ENCODE measurements at regions of chr14 and their contacts with region 1.

Region 1: GRCh38 chr14:69191340-69192111 is at the start of gene EXD2:
- DNase-seq: peak; percentile 92
- H3K4me3 Mint-ChIP-seq: peak within 1 kb of the TSS; percentile 92
- H3K27ac Mint-ChIP-seq: peak within 1 kb of the TSS; percentile 81
- H3K4me1 Mint-ChIP-seq: no peaks in the 10 kb centered on the region
- H3K27me3 Mint-ChIP-seq: peaks cover 13% of the 10 kb centered on the region
- CTCF ChIP-seq: no peak
- total RNA-seq, gene EXD2: 13.1 and 14.0 TPM in 2 replicates

Region 2: DNA sequence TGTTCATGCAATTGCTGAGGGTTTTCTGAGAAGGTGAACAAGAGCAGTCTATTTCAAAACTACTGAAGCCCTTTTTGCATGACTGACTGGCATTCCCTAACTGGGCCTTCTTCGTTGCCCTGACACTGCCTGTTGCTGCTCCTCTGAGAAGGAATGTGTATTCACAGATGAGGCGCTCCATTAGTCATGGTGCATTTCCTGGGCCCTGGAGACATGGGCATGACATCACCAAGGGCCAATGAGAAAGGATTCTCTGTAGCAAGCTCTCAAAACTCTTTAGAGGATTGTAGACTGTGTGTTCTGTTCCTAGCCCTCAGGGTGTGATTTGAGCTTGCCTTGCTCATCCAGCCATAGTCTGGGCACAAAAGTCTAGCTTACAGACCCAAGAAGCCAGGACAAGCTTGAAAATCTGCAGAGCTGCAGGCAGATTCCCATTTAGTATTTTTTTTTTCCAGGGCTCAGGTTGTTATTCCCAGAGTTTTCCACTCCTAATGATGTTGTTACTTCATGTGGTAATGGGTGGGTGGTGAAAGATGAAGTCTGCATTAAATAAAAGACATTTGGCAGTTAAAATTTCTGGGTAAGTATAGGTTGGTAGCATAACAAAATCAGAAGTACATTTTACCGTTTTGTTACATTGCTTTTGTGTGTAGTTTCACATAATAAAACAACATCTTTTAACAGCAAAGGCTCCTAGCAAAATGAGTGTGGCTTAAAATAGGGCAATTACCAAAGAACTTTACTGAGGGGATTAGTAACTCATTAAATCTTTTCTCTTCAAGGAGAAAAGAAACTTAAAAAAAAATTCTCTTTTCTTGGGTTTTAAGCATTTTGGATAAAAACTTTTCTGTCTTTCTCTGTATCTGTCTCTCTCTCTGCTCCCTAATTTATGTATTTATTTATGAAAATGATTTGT is 1053.6 kb before region 1 on chr14:
- CTCF ChIA-PET with region 1: no interaction called
- intact Hi-C with region 1: no loop called
- DNase-seq: peak; percentile 79
- H3K4me3 Mint-ChIP-seq: no peak overlapping the region
- H3K27ac Mint-ChIP-seq: peak overlapping the region; percentile 89
- H3K4me1 Mint-ChIP-seq: peaks cover 38% of the 10 kb centered on the region
- H3K27me3 Mint-ChIP-seq: no peaks in the 10 kb centered on the region
- CTCF ChIP-seq: no peak

Region 3: DNA sequence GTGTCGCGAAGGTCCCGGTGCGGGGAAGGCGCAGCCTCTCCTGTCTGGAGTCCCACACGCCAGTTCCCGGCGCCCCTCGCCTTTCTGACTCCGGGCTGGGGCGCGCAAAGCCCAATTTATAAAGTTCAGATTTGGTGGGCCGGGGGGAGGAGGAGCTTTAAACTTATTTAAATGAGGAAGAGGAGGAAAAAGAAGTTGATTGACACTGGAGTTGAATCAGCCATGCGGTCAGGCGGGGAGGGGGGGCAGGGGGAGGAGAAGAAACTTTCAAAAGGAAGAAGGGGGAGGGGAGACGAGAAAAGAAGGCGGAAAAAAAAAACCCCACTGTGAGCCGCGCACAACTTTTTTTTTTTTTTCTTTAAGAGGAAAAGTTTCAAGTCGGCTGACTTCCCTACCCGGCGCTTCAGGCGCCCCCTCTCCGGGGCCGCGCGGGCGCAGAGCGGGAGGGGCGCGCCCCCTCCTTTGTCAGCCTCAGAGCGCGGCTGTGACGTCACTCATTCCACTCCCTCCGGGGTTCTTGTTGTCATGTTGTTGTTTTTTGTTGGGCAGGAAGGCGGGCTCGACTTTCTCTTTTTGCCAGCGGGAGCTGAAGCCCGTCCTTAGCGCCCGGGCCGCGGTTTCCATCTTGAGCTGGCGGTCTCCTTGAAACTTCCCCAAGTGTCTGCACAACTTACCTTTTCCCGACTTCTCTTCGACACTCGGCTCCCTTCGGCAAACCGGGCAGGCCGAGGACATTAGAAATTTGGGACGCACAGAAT is 398.4 kb before region 1 on chr14 and contains the start of gene ZFP36L1:
- CTCF ChIA-PET with region 1: no interaction called
- intact Hi-C with region 1: no loop called
- DNase-seq: peak; percentile 91
- H3K4me3 Mint-ChIP-seq: peak within 1 kb of the TSS; percentile 85
- H3K27ac Mint-ChIP-seq: peak within 1 kb of the TSS; percentile 81
- H3K4me1 Mint-ChIP-seq: peaks cover 11% of the 10 kb centered on the region
- H3K27me3 Mint-ChIP-seq: no peaks in the 10 kb centered on the region
- CTCF ChIP-seq: no peak
- total RNA-seq, gene ZFP36L1: 208 and 240 TPM in 2 replicates

Region 4: DNA sequence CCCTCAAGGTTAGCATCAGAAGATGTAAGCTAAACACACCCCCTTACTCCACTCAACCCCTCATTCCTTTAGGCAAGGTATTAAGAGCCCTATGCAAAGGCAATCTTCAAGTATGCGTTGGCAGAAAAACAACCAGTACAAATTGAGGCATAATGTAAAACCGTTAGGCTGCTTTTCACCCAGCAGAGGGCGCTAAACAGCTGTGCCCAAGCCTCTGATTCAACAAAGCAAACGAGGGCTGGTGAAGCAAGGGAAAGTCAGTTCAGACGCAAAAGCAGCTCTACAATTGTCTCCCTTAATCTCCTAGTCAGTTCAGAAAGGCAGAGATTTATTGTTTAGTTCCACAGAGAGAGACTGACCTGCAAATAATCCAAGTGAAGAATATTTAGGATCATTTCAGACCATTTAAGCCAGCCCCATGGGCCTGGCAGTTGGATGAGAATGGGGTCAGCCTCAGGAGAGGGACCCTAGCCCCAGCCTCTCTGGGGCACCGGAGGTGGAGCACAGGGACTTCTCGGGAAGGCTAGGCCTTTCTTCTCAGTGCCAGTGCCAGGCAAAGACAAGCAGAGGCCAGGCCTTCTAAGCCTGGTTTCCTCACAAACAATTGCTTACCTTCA is 62.2 kb before region 1 on chr14:
- CTCF ChIA-PET with region 1: interaction called, 3 read pairs
- intact Hi-C with region 1: loop called (anchors 10 kb)
- DNase-seq: peak; percentile 64
- H3K4me3 Mint-ChIP-seq: no peak overlapping the region
- H3K27ac Mint-ChIP-seq: no peak overlapping the region
- H3K4me1 Mint-ChIP-seq: peaks cover 17% of the 10 kb centered on the region
- H3K27me3 Mint-ChIP-seq: no peaks in the 10 kb centered on the region
- CTCF ChIP-seq: peak; percentile 57